ENCODE measurements at regions of chr1 and their contacts with region 1.

Region 1: DNA sequence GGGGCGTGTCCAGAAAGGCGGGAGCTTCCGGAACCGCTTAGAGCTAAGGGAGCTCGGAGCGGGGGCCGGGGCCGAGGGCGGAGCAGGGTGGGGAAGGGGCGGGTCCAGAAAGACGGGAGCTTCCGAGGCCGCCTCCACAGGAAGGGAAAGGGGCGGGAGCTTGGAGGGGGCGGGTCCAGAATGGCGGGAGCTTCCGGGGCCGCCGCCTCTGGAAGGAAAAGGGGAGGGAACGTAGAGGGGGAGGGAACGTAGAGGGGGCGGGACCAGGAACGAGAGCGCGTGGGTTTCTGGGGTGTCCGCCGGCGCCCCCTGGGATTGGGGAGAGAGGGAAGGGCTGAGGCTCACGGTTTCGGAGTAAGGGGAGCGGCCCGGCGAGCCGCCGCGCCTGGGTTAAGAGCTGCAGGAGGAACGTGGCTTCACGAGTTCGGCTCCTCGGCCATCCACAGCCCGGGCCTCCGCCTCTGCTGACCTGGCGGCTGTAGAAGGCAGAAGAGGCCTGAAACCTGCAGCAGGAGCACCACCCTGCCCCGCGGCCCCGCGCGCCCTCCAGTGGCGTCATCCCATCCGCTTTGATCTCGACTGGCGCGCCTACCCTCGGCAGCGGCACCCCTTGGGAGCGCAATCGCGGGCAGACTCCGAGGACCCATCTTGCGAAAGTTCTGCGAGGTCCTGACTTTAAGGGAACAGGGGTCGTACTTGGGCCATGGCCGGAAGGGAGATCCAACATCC is 22.9 kb upstream of the HPDL start:
- DNase-seq: peak; percentile 84
- ATAC-seq: peak; percentile 86
- H3K4me3 ChIP-seq: peak overlapping the region; percentile 90
- H3K27ac ChIP-seq: peak overlapping the region; percentile 95
- H3K4me1 ChIP-seq: peaks cover 18% of the 10 kb centered on the region
- H3K27me3 ChIP-seq: no peaks in the 10 kb centered on the region
- CTCF ChIP-seq: peak; percentile 65 to 75 (median 68)
- EP300 ChIP-seq: no peak
- POLR2A ChIP-seq: peak; percentile 95
- RAD21 ChIP-seq: peak; percentile 51

Region 2: GRCh38 chr1:44714944-44715571 is 588.7 kb before region 1 on chr1:
- CTCF ChIA-PET with region 1: interaction called, 3 read pairs
- POLR2A ChIA-PET with region 1: no interaction called
- RAD21 ChIA-PET with region 1: no interaction called
- SMC1A ChIA-PET with region 1: interaction called, 5 read pairs
- in situ Hi-C with region 1: loop called (anchors 5 kb)
- intact Hi-C with region 1: no loop called
- DNase-seq: peak; percentile 71
- ATAC-seq: peak; percentile 75
- H3K4me3 ChIP-seq: no peak overlapping the region
- H3K27ac ChIP-seq: peak overlapping the region; percentile 61
- H3K4me1 ChIP-seq: peaks cover 56% of the 10 kb centered on the region
- H3K27me3 ChIP-seq: no peaks in the 10 kb centered on the region
- CTCF ChIP-seq: peak; percentile 89 to 96 (median 90)
- EP300 ChIP-seq: no peak
- POLR2A ChIP-seq: no peak
- RAD21 ChIP-seq: peak; percentile 75

Region 3: DNA sequence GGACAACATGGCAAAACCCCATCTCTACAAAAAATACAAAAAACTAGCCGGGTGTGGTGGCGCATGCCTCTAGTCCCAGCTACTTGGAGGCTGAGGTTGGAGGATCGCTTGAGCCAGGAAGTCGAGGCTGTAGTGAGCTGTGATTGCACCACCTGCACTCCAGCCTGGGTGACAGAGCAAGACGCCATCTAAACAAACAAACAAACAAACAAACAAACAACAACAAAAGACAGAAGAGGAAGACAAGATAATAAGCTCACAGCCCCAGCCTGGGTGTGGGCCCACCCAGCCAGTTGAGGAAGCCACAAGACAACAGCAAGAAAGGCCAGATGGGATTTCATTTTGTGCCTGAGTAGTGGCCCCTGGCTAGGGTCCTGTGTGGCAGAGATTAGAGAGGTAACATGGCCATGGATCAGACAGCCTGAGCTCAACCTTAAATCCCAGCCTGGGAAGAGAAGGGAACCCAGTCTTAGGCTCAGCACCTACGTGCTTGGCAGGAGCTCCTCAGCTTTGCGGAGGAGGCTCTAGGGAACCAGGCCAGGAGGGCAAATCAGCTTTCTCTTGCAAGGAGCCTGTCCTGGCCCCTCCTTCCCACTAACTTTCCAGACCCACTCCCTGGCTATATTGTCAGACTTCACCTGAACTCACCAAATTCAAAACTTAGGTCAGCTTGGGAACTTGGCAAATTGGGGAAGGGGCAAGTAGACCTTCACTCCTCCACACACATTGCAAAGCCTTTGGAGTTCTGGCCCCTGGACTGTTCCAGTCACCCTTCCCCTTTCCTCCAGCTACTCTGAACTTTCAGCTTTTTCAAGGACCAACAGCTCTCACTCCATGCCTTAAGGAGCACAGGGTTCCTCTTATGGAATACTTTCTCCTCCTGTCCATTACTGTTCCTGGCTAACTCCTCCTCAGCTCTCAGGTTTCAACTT is 510.7 kb before region 1 on chr1:
- CTCF ChIA-PET with region 1: interaction called, 15 read pairs
- POLR2A ChIA-PET with region 1: interaction called, 3 read pairs
- RAD21 ChIA-PET with region 1: interaction called, 5 read pairs
- SMC1A ChIA-PET with region 1: interaction called, 3 read pairs
- in situ Hi-C with region 1: no loop called
- intact Hi-C with region 1: loop called (anchors 5 kb)
- DNase-seq: no peak
- ATAC-seq: no peak
- H3K4me3 ChIP-seq: no peak overlapping the region
- H3K27ac ChIP-seq: no peak overlapping the region
- H3K4me1 ChIP-seq: no peaks in the 10 kb centered on the region
- H3K27me3 ChIP-seq: no peaks in the 10 kb centered on the region
- CTCF ChIP-seq: no peak
- EP300 ChIP-seq: no peak
- POLR2A ChIP-seq: no peak
- RAD21 ChIP-seq: no peak

Region 4: GRCh38 chr1:44835738-44836675 is 467.7 kb before region 1 on chr1:
- CTCF ChIA-PET with region 1: interaction called, 15 read pairs
- POLR2A ChIA-PET with region 1: interaction called, 5 read pairs
- RAD21 ChIA-PET with region 1: interaction called, 3 read pairs
- SMC1A ChIA-PET with region 1: interaction called, 4 read pairs
- in situ Hi-C with region 1: loop called (anchors 5 kb)
- intact Hi-C with region 1: loop called (anchors 2 kb)
- DNase-seq: peak; percentile 55
- ATAC-seq: peak; percentile 98
- H3K4me3 ChIP-seq: no peak overlapping the region
- H3K27ac ChIP-seq: no peak overlapping the region
- H3K4me1 ChIP-seq: no peaks in the 10 kb centered on the region
- H3K27me3 ChIP-seq: no peaks in the 10 kb centered on the region
- CTCF ChIP-seq: peak; percentile 84 to 96 (median 91)
- EP300 ChIP-seq: no peak
- POLR2A ChIP-seq: no peak
- RAD21 ChIP-seq: peak; percentile 73

Region 5: GRCh38 chr1:45051005-45051772 is 252.6 kb before region 1 on chr1:
- CTCF ChIA-PET with region 1: interaction called, 13 read pairs
- POLR2A ChIA-PET with region 1: interaction called, 3 read pairs
- RAD21 ChIA-PET with region 1: interaction called, 3 read pairs
- SMC1A ChIA-PET with region 1: interaction called, 5 read pairs
- in situ Hi-C with region 1: no loop called
- intact Hi-C with region 1: no loop called
- DNase-seq: no peak
- ATAC-seq: peak; percentile 63
- H3K4me3 ChIP-seq: no peak overlapping the region
- H3K27ac ChIP-seq: peak overlapping the region; percentile 27
- H3K4me1 ChIP-seq: peaks cover 31% of the 10 kb centered on the region
- H3K27me3 ChIP-seq: no peaks in the 10 kb centered on the region
- CTCF ChIP-seq: no peak
- EP300 ChIP-seq: no peak
- POLR2A ChIP-seq: no peak
- RAD21 ChIP-seq: no peak

Region 6: GRCh38 chr1:45246760-45247159 is 57.0 kb before region 1 on chr1:
- CTCF ChIA-PET with region 1: no interaction called
- POLR2A ChIA-PET with region 1: no interaction called
- RAD21 ChIA-PET with region 1: no interaction called
- SMC1A ChIA-PET with region 1: no interaction called
- in situ Hi-C with region 1: no loop called
- intact Hi-C with region 1: no loop called
- DNase-seq: no peak
- ATAC-seq: no peak
- H3K4me3 ChIP-seq: no peak overlapping the region
- H3K27ac ChIP-seq: no peak overlapping the region
- H3K4me1 ChIP-seq: no peaks in the 10 kb centered on the region
- H3K27me3 ChIP-seq: no peaks in the 10 kb centered on the region
- CTCF ChIP-seq: no peak
- EP300 ChIP-seq: no peak
- POLR2A ChIP-seq: no peak
- RAD21 ChIP-seq: no peak

Region 7: DNA sequence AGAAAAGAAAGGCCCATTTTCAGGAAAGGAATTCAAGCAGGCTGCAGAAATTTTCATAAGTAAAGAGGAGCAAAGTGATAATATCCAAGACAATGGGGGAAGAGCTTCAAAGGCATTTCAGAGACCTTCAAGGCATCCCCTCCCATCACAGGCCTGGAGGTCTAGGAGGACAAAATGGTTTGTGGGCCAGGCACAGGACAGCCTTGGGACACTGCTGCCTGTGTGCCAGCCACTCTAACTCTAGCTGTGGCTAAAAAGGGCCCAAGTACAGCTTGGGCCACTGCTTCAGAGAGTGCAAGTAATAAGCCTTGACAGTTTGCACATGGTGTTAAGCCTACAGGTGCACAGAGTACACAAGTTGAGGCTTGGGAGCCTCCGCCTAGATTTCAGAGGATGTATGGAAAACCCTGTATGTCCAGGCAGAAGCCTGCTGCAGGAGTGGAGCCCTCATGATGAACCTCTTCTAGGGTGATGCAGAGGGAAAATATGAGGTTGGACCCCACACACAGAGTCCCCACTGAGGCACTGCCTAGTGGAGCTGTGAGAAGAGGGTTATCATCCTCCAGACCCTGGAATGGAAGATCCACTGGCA is 45.6 kb before region 1 on chr1:
- CTCF ChIA-PET with region 1: no interaction called
- POLR2A ChIA-PET with region 1: no interaction called
- RAD21 ChIA-PET with region 1: no interaction called
- SMC1A ChIA-PET with region 1: no interaction called
- in situ Hi-C with region 1: no loop called
- intact Hi-C with region 1: no loop called
- DNase-seq: no peak
- ATAC-seq: no peak
- H3K4me3 ChIP-seq: no peak overlapping the region
- H3K27ac ChIP-seq: no peak overlapping the region
- H3K4me1 ChIP-seq: no peaks in the 10 kb centered on the region
- H3K27me3 ChIP-seq: no peaks in the 10 kb centered on the region; a peak in 1 of 4 replicates
- CTCF ChIP-seq: no peak
- EP300 ChIP-seq: no peak
- POLR2A ChIP-seq: no peak
- RAD21 ChIP-seq: no peak

Region 8: DNA sequence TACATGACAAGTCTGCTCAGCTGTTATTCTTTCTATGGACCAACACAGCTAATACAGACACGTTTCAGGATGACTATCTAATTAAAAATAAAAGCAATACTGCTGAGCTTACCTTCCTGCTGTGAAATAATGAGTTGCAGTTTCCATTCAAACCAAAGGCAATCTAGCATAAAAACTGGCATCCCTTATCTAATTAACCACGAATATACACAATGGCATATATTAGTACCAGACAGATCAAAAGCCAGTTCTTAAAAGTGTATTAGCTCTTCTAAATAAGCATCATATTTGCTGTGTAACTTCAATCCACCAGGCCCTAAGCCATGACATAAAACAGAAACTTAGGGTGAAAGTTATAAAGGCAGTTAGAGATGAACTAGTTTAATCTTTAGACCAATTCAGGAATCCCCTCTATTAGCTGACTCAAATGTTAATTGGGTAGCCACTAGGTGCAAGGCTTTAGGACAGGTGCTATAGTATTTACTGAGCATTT is 166.6 kb after region 1 on chr1:
- CTCF ChIA-PET with region 1: interaction called, 3 read pairs
- POLR2A ChIA-PET with region 1: no interaction called
- RAD21 ChIA-PET with region 1: interaction called, 4 read pairs
- SMC1A ChIA-PET with region 1: interaction called, 10 read pairs
- in situ Hi-C with region 1: no loop called
- intact Hi-C with region 1: no loop called
- DNase-seq: peak; percentile 72
- ATAC-seq: peak; percentile 82
- H3K4me3 ChIP-seq: no peak overlapping the region
- H3K27ac ChIP-seq: no peak overlapping the region
- H3K4me1 ChIP-seq: peaks cover 61% of the 10 kb centered on the region
- H3K27me3 ChIP-seq: no peaks in the 10 kb centered on the region
- CTCF ChIP-seq: no peak
- EP300 ChIP-seq: peak in 1 of 2 experiments; percentile 32; a peak in 1 of 4 replicates
- POLR2A ChIP-seq: no peak
- RAD21 ChIP-seq: no peak

Region 9: GRCh38 chr1:45583264-45583665 is 279.5 kb after region 1 on chr1:
- CTCF ChIA-PET with region 1: interaction called, 5 read pairs
- POLR2A ChIA-PET with region 1: interaction called, 8 read pairs
- RAD21 ChIA-PET with region 1: interaction called, 10 read pairs
- SMC1A ChIA-PET with region 1: interaction called, 3 read pairs
- in situ Hi-C with region 1: no loop called
- intact Hi-C with region 1: no loop called
- DNase-seq: peak; percentile 98
- ATAC-seq: peak; percentile 89
- H3K4me3 ChIP-seq: peak overlapping the region; percentile 94
- H3K27ac ChIP-seq: peak overlapping the region; percentile 97
- H3K4me1 ChIP-seq: peaks cover 12% of the 10 kb centered on the region; the same call in 1 of the 2 replicates
- H3K27me3 ChIP-seq: no peaks in the 10 kb centered on the region
- CTCF ChIP-seq: no peak
- EP300 ChIP-seq: no peak
- POLR2A ChIP-seq: no peak
- RAD21 ChIP-seq: no peak

Region 10: DNA sequence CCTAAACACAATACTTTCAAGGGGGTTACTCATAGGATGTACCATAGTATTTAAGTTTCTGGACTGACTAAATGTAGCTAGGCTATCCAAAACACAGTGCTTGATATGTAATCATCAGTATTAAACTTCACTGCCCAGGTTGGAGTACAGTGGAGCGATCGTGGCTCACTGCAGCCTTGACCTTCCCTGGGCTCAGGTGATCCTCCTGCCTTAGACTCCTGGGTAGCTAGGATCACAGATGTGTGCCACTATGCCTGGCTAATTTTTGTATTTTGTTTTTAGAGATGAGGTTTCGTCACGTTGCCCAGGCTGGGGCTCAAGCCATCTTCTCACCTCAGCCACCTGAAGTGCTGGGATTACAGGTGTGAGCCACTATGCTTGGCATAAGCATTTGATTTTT is 290.7 kb after region 1 on chr1:
- CTCF ChIA-PET with region 1: no interaction called
- POLR2A ChIA-PET with region 1: no interaction called
- RAD21 ChIA-PET with region 1: no interaction called
- SMC1A ChIA-PET with region 1: no interaction called
- in situ Hi-C with region 1: no loop called
- intact Hi-C with region 1: no loop called
- DNase-seq: no peak
- ATAC-seq: peak; percentile 10; the same call in 1 of the 3 replicates
- H3K4me3 ChIP-seq: no peak overlapping the region
- H3K27ac ChIP-seq: no peak overlapping the region
- H3K4me1 ChIP-seq: no peaks in the 10 kb centered on the region
- H3K27me3 ChIP-seq: no peaks in the 10 kb centered on the region
- CTCF ChIP-seq: no peak
- EP300 ChIP-seq: no peak
- POLR2A ChIP-seq: no peak
- RAD21 ChIP-seq: no peak